Activated CD4-positive, alpha-beta T cell treated with anti-CD3 and anti-CD28 coated beads, Interleukin-2, amount 10 ng/mL, durations not matched to agents 24 days and 14 days (primary cell): ENCODE measurements at regions of chr1 and their contacts with region 1.

Region 1: GRCh38 chr1:52552505-52553361 is at the start of gene TUT4:
- DNase-seq: peak; percentile 93
- H3K4me3 Mint-ChIP-seq: no peak within 1 kb of the TSS
- H3K27ac Mint-ChIP-seq: peak within 1 kb of the TSS; percentile 91
- H3K4me1 Mint-ChIP-seq: peaks cover 23% of the 10 kb centered on the region
- H3K27me3 Mint-ChIP-seq: peaks cover 2% of the 10 kb centered on the region
- total RNA-seq, gene TUT4: 57.6 and 61.2 TPM in 2 replicates

Region 2: GRCh38 chr1:52365746-52366516 is 186.8 kb before region 1 on chr1 and contains the start of gene CC2D1B:
- intact Hi-C with region 1: loop called (anchors 1 kb)
- DNase-seq: peak; percentile 100
- H3K4me3 Mint-ChIP-seq: peak within 1 kb of the TSS; percentile 97
- H3K27ac Mint-ChIP-seq: peak within 1 kb of the TSS; percentile 92
- H3K4me1 Mint-ChIP-seq: peaks cover 39% of the 10 kb centered on the region
- H3K27me3 Mint-ChIP-seq: no peaks in the 10 kb centered on the region
- total RNA-seq, gene CC2D1B: 34.8 and 36.7 TPM in 2 replicates

Region 3: GRCh38 chr1:52424231-52424636 is 128.5 kb before region 1 on chr1:
- intact Hi-C with region 1: loop called (anchors 1 kb)
- DNase-seq: peak; percentile 78
- H3K4me3 Mint-ChIP-seq: peak overlapping the region; percentile 67
- H3K27ac Mint-ChIP-seq: peak overlapping the region; percentile 81
- H3K4me1 Mint-ChIP-seq: peaks cover 39% of the 10 kb centered on the region
- H3K27me3 Mint-ChIP-seq: no peaks in the 10 kb centered on the region

Region 4: GRCh38 chr1:52601991-52602855 is 49.5 kb after region 1 on chr1 and contains the start of gene GPX7:
- intact Hi-C with region 1: loop called (anchors 1 kb)
- DNase-seq: peak; percentile 91
- H3K4me3 Mint-ChIP-seq: peak within 1 kb of the TSS; percentile 84
- H3K27ac Mint-ChIP-seq: peak within 1 kb of the TSS; percentile 87
- H3K4me1 Mint-ChIP-seq: peaks cover 37% of the 10 kb centered on the region
- H3K27me3 Mint-ChIP-seq: no peaks in the 10 kb centered on the region
- total RNA-seq, gene GPX7: 28.0 and 29.4 TPM in 2 replicates

Region 5: GRCh38 chr1:52672946-52673345 is 120.2 kb after region 1 on chr1:
- intact Hi-C with region 1: no loop called
- DNase-seq: no peak
- H3K4me3 Mint-ChIP-seq: no peak overlapping the region
- H3K27ac Mint-ChIP-seq: no peak overlapping the region
- H3K4me1 Mint-ChIP-seq: peaks cover 13% of the 10 kb centered on the region
- H3K27me3 Mint-ChIP-seq: no peaks in the 10 kb centered on the region

Region 6: DNA sequence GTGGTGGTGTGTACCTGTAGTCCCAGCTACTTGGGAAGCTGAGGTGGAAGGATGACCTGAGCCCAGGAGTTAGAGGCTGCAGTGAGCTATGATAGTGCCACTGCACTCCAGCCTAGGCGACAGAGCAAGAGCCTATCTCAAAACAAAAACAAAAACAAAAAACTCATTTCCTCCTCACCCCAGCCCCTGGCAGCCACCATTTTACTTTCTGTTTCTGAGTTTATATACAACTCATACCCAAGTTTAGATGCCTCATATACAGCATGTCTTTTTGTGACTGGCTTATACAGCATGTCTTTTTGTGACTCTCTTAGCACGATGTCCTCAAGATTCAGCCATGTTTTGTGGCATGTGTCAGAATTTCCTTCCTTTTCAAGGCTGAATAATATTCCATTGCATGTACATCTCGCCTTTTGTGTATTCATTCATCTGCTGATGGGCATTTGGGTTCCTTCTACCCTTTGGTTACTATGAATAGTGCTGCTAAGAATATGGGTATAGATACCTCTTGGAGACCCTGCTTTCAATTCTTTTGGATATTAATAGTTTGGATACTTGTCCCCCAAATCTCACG is 130.7 kb after region 1 on chr1:
- intact Hi-C with region 1: loop called (anchors 10 kb)
- DNase-seq: peak; percentile 64
- H3K4me3 Mint-ChIP-seq: no peak overlapping the region
- H3K27ac Mint-ChIP-seq: no peak overlapping the region
- H3K4me1 Mint-ChIP-seq: peaks cover 8% of the 10 kb centered on the region
- H3K27me3 Mint-ChIP-seq: no peaks in the 10 kb centered on the region